ENCODE measurements at regions of chr11 and their contacts with region 1.

Region 1: DNA sequence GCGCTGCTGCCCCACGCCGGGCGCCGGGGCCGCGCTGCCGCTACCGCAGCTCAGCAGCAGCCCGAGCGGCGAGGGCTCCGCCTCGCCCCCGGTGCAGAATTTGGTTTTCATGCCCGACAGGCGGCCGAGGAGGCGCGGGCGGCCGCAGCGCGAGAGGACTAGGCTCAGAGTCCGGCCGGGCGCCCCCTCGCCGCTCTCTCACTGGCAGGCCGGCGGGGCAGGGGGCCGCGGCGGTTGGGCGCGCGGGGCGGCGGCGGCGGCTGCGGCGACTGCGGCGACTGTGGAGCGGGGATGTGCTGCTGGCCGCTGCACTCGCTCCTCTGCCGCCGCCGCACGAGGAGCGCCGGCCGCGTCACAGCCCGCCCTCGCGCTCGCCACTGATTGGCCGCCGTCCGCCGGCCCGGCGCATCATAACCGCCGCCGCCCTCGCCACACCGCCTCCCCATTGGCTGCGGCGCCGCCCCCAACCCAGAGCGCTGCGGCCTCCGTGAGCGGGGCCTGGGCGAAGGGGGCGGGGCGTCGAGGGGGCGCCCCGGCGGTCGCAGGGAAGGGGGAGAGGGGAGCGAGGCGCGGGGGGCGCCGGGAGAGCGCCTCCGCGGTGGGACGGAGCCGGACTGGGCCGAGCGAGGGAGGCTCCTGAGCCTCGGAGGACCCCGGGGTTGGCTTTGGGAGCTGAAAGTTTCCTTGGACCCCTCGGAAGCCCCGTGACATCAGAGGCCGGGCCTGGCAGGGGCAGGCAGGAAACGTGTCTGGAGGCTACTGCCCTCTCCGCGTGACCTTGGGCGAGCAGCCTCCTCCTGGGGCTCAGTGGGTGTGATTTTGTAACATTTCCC is at the start of gene CHKA:
- DNase-seq: peak; percentile 86 to 98 (median 92)
- H3K4me3 ChIP-seq: peak within 1 kb of the TSS; percentile 60 to 94 (median 78)
- H3K27ac ChIP-seq: peak within 1 kb of the TSS; percentile 92 to 100 (median 98)
- H3K27me3 ChIP-seq: no peaks in the 10 kb centered on the region
- CTCF ChIP-seq: peak in 19 of 56 donors; percentile 5 to 47 (median 27)
- total RNA-seq, gene CHKA: 56.6 to 150 (median 86.1) TPM

Region 2: GRCh38 chr11:68010090-68011041 is 110.9 kb before region 1 on chr11 and contains the start of gene ALDH3B1:
- intact Hi-C with region 1: loop called in 1 of 2 experiments (anchors 5 kb)
- DNase-seq: peak in 8 of 10 donors; percentile 47 to 78 (median 71)
- H3K4me3 ChIP-seq: peak within 1 kb of the TSS; percentile 2 to 65 (median 42)
- H3K27ac ChIP-seq: peak within 1 kb of the TSS; percentile 29 to 92 (median 82)
- H3K27me3 ChIP-seq: no peaks in the 10 kb centered on the region
- CTCF ChIP-seq: peak in 3 of 56 donors; percentile 2 to 11 (median 2)
- total RNA-seq, gene ALDH3B1: 1.2 to 7.7 (median 3.1) TPM

Region 3: DNA sequence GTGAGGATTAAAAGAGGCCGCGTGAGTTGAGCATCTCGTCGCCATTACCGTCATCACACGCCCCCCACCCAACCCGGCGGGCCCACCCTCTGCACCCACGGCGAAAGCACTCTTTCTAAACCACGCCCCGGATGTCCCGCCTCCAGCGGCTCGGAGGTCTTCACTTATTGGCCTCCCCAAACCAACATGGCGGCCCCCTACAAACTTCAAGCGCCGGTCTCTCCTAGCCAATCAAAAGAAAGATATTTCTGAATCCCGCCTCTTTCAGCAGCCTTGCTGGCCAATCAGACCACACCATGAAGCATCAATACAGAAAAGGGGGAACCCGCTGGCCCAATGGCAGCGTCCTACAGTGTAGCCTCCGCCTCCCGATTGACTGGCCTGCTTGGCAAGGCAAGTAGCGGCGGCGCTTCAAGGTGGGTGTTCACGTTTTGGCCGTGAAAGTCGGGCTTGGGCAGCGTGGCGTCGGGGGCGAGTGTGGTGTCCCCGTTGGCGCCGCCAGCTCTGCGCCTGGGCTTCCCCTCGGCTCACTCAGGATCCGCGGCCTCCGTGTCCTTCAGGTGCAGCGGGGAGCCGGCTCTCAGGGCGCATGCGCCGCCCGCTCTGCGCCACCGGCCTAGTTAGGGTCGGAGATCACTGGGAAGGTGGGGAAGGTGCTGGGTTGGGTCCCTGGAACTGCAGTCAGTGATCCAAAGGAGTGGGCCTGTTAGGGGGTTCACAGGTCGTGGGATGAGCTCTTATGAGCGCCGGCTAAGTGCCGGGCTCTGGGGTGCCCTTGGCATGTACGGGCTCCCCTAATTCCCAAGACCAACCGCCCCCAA is 90.8 kb before region 1 on chr11 and contains the start of gene NDUFS8:
- intact Hi-C with region 1: loop called (anchors 2 to 5 kb)
- DNase-seq: peak; percentile 95 to 99 (median 97)
- H3K4me3 ChIP-seq: peak within 1 kb of the TSS; percentile 59 to 99 (median 87)
- H3K27ac ChIP-seq: peak within 1 kb of the TSS in 58 of 59 donors; percentile 33 to 97 (median 90)
- H3K27me3 ChIP-seq: no peaks in the 10 kb centered on the region
- CTCF ChIP-seq: peak in 18 of 56 donors; percentile 8 to 51 (median 26)
- total RNA-seq, gene NDUFS8: 98.7 to 186 (median 138) TPM

Region 4: GRCh38 chr11:68076371-68077042 is 44.8 kb before region 1 on chr11:
- intact Hi-C with region 1: loop called in 1 of 2 experiments (anchors 5 kb)
- DNase-seq: no peak
- H3K4me3 ChIP-seq: no peak overlapping the region
- H3K27ac ChIP-seq: peak overlapping the region in 19 of 59 donors; percentile 3 to 64 (median 29)
- H3K27me3 ChIP-seq: no peaks in the 10 kb centered on the region
- CTCF ChIP-seq: peak in 36 of 56 donors; percentile 8 to 61 (median 34)

Region 5: DNA sequence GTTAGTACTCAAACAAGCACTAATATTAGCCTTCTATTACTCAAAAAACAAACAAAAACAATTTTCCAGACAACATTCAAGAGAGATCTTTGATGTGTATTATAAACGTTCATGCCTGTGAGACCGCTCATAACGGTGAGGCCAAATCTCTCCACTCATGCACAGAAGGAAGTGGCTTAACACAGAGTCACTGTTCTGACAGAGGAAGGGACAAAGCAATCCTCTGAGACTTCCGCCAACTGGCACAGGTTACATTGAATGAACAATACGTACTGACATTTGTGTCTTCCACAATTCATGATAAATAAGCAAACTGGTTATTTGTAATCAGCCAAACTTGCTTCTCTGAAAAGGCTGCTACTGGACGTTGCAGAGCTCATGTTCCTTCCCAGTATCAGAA is 30.6 kb before region 1 on chr11:
- intact Hi-C with region 1: loop called in 1 of 2 experiments (anchors 2 kb)
- DNase-seq: peak in 6 of 10 donors; percentile 37 to 80 (median 58)
- H3K4me3 ChIP-seq: peak overlapping the region in 33 of 59 donors; percentile 0 to 54 (median 12)
- H3K27ac ChIP-seq: peak overlapping the region; percentile 29 to 96 (median 90)
- H3K27me3 ChIP-seq: no peaks in the 10 kb centered on the region
- CTCF ChIP-seq: peak in 4 of 56 donors; percentile 5 to 24 (median 17)

Region 6: DNA sequence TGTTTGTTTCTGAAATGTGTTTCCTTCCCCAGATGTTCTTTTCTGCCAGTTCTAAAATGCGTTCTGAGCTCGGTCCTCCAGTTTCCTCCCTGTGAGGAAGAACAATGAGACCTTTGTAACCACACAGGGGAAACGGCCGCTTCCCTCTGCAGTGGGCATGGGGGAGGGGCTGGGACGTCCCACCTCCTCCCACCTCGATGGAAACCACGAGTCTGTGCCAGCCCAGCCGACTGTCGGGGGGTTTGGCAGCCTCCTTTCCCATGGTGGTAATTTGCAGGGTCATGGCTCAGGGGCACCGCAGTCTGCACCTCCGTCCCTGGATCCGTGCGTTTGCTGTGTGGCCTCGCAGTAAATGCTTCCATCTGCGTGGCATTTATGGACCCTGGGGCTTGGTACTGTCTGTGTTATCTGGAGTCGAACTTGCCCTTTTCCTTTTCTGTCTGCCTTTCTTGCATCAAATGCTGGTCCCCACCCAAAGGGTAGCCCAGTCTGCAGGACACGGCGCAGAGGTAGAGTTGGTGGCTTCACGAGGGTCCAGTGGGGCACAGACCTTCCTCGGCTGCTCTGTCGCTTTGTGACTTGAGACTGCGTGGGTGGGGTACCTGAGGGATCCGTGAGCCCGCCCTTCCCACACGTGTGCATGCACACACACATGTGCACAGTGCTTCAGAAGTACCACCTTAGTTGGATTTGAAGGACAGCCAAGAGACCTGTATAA is 207.2 kb after region 1 on chr11:
- intact Hi-C with region 1: no loop called
- DNase-seq: peak in 7 of 10 donors; percentile 52 to 69 (median 62)
- H3K4me3 ChIP-seq: peak overlapping the region in 37 of 59 donors; percentile 1 to 54 (median 24)
- H3K27ac ChIP-seq: peak overlapping the region; percentile 40 to 94 (median 85)
- H3K27me3 ChIP-seq: peaks cover 0 to 5% (median 0%) of the 10 kb centered on the region in 45 donors
- CTCF ChIP-seq: peak in 9 of 56 donors; percentile 8 to 21 (median 14)

Measured in dorsolateral prefrontal cortex (tissue), 120 donors.